ENCODE measurements at regions of chr17 and their contacts with region 1.

Region 1: DNA sequence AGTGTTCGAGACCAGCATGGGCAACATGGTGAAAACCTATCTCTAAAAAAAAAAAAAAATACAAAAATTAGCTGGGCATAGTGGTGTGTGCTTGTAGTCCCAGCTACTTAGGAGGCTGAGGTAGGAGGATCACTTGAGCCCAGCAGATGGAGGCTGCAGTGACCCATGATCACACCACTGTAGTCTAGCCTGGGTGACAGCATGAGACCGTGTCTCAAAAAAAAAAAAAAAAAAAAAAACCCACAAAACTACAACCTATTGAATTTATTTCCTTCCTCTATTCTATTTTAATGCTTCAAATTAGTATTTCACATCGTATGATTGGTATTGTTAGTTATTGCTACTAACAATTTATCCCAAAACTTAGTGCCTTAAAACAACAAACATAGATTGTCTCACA is 9.4 kb upstream of the NUFIP2 start:
- DNase-seq: no peak
- ATAC-seq: no peak
- H3K4me3 ChIP-seq: no peak overlapping the region
- H3K27ac ChIP-seq: no peak overlapping the region
- H3K4me1 ChIP-seq: no peaks in the 10 kb centered on the region
- H3K27me3 ChIP-seq: no peaks in the 10 kb centered on the region
- CTCF ChIP-seq: no peak
- EP300 ChIP-seq: no peak
- POLR2A ChIP-seq: no peak
- RAD21 ChIP-seq: no peak

Region 2: GRCh38 chr17:28951991-28952975 is 351.1 kb before region 1 on chr17:
- CTCF ChIA-PET with region 1: no interaction called
- POLR2A ChIA-PET with region 1: no interaction called
- RAD21 ChIA-PET with region 1: no interaction called
- SMC1A ChIA-PET with region 1: no interaction called
- in situ Hi-C with region 1: no loop called
- intact Hi-C with region 1: no loop called
- DNase-seq: peak; percentile 100
- ATAC-seq: peak; percentile 82
- H3K4me3 ChIP-seq: peak overlapping the region; percentile 83
- H3K27ac ChIP-seq: peak overlapping the region; percentile 74
- H3K4me1 ChIP-seq: peaks cover 4% of the 10 kb centered on the region
- H3K27me3 ChIP-seq: no peaks in the 10 kb centered on the region
- CTCF ChIP-seq: no peak
- EP300 ChIP-seq: peak in 1 of 2 experiments; percentile 31; a peak in 1 of 4 replicates
- POLR2A ChIP-seq: peak; percentile 85
- RAD21 ChIP-seq: no peak

Region 3: DNA sequence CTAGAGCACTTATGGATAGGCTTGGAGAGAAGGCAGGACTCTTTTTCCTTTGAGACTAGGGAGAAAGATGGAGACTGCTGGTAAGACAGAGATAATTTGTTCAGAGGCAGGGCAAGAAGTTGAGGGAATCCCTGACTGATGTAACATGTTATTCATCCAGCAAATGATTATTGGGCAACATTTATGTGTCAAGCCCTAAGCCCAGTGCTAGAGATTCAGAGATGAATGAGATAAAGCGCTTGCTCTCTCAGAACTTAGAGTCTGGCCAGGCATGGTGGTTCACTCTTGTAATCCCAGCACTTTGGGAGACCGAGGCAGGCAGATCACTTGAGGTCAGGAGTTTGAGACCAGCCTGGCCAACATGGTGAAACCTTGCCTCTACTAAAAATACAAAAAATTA is 38.4 kb after region 1 on chr17:
- CTCF ChIA-PET with region 1: no interaction called
- POLR2A ChIA-PET with region 1: interaction called, 8 read pairs
- RAD21 ChIA-PET with region 1: no interaction called
- SMC1A ChIA-PET with region 1: no interaction called
- in situ Hi-C with region 1: no loop called
- intact Hi-C with region 1: loop called (anchors 5 kb)
- DNase-seq: no peak
- ATAC-seq: no peak
- H3K4me3 ChIP-seq: no peak overlapping the region
- H3K27ac ChIP-seq: no peak overlapping the region
- H3K4me1 ChIP-seq: no peaks in the 10 kb centered on the region
- H3K27me3 ChIP-seq: no peaks in the 10 kb centered on the region; a peak in 1 of 4 replicates
- CTCF ChIP-seq: no peak
- EP300 ChIP-seq: no peak
- POLR2A ChIP-seq: no peak
- RAD21 ChIP-seq: no peak

Region 4: DNA sequence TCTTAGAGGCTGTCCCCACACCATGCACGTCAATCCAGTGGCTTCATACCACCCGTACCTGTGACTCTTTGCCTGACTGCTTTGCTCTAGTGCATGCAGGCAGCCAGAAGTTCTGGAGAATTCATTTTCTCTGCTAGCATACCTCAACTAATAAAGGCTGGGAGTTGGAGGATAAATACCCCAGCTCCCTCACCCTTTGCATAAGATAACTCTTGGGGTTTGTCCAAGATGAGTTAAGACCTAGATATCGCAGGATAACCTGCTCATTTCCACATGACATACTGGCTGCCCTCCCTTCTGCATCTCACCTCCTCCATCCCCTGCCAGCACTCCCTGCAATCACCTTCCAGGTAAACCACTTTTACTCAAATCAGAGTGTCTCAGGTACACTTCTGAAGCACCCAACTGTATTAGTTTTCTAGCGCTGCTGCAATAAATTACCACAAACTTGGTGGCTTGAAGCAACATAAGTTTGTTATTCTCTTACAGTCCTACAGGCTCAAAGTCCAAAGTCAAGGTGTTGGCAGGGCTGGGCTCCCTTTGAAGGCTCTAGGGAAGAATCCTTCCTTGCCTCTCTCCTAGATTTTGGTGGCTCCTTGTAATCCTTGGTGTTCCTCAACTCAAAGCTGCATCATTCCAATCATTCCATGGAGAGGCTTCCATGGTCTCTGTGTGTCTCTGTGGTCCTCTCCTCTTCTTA is 1374.3 kb after region 1 on chr17:
- CTCF ChIA-PET with region 1: no interaction called
- POLR2A ChIA-PET with region 1: interaction called, 11 read pairs
- RAD21 ChIA-PET with region 1: no interaction called
- SMC1A ChIA-PET with region 1: no interaction called
- in situ Hi-C with region 1: no loop called
- intact Hi-C with region 1: no loop called
- DNase-seq: no peak
- ATAC-seq: no peak
- H3K4me3 ChIP-seq: no peak overlapping the region
- H3K27ac ChIP-seq: no peak overlapping the region
- H3K4me1 ChIP-seq: no peaks in the 10 kb centered on the region
- H3K27me3 ChIP-seq: no peaks in the 10 kb centered on the region
- CTCF ChIP-seq: no peak
- EP300 ChIP-seq: no peak
- POLR2A ChIP-seq: no peak
- RAD21 ChIP-seq: no peak